GM12878 (cell line): ENCODE measurements at regions of chr6 and their contacts with region 1.

Region 1: GRCh38 chr6:62968834-62969233 is 242.4 kb upstream of the FKBP1C start:
- DNase-seq: no peak
- ATAC-seq: no peak
- H3K4me3 ChIP-seq: no peak overlapping the region
- H3K27ac ChIP-seq: no peak overlapping the region
- H3K4me1 ChIP-seq: no peaks in the 10 kb centered on the region
- H3K27me3 ChIP-seq: no peaks in the 10 kb centered on the region
- CTCF ChIP-seq: no peak
- EP300 ChIP-seq: no peak
- POLR2A ChIP-seq: no peak
- RAD21 ChIP-seq: no peak

Region 2: DNA sequence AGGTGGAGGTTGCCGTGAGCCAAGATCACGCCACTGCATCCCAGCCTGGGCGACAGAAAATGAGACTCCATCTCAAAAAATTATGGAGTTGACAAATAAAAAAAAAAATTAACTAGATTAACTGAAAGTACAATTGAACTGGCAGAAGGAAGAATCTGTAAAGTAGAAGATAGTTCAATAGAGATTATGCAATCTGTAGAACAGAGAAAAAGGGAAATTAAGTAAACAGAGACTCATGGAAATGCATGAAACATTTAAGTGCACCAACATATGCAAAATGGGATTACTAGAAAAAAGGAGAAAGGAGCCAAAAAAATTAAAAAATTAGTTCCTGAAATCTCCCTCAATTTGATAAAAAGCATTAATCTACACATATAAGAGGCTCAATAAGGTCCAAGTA is 494.0 kb before region 1 on chr6:
- CTCF ChIA-PET with region 1: no interaction called
- POLR2A ChIA-PET with region 1: no interaction called
- RAD21 ChIA-PET with region 1: no interaction called
- SMC1A ChIA-PET with region 1: no interaction called
- in situ Hi-C with region 1: no loop called
- intact Hi-C with region 1: no loop called
- DNase-seq: no peak
- ATAC-seq: no peak
- H3K4me3 ChIP-seq: no peak overlapping the region
- H3K27ac ChIP-seq: no peak overlapping the region
- H3K4me1 ChIP-seq: no peaks in the 10 kb centered on the region
- H3K27me3 ChIP-seq: no peaks in the 10 kb centered on the region
- CTCF ChIP-seq: no peak
- EP300 ChIP-seq: no peak
- POLR2A ChIP-seq: no peak
- RAD21 ChIP-seq: no peak

Region 3: GRCh38 chr6:62980093-62980492 is 11.3 kb after region 1 on chr6:
- CTCF ChIA-PET with region 1: interaction called, 4 read pairs
- POLR2A ChIA-PET with region 1: no interaction called
- RAD21 ChIA-PET with region 1: interaction called, 5 read pairs
- SMC1A ChIA-PET with region 1: interaction called, 10 read pairs
- in situ Hi-C with region 1: no loop called
- intact Hi-C with region 1: no loop called
- DNase-seq: no peak
- ATAC-seq: peak; percentile 76
- H3K4me3 ChIP-seq: no peak overlapping the region
- H3K27ac ChIP-seq: no peak overlapping the region
- H3K4me1 ChIP-seq: no peaks in the 10 kb centered on the region
- H3K27me3 ChIP-seq: no peaks in the 10 kb centered on the region
- CTCF ChIP-seq: no peak
- EP300 ChIP-seq: no peak
- POLR2A ChIP-seq: no peak
- RAD21 ChIP-seq: no peak